ENCODE measurements at regions of chr11 and their contacts with region 1.

Region 1: GRCh38 chr11:103682318-103683184 is 353.9 kb upstream of the DDI1 start:
- DNase-seq: peak; percentile 49
- H3K4me3 ChIP-seq: no peak overlapping the region
- H3K27ac ChIP-seq: no peak overlapping the region
- H3K4me1 ChIP-seq: peaks cover 0 to 7% (median 3%) of the 10 kb centered on the region in 4 donors
- H3K27me3 ChIP-seq: no peaks in the 10 kb centered on the region
- CTCF ChIP-seq: peak; percentile 67 to 91 (median 80)
- EP300 ChIP-seq: no peak
- POLR2A ChIP-seq: no peak

Region 2: GRCh38 chr11:104134751-104135479 is 452.4 kb after region 1 on chr11:
- in situ Hi-C with region 1: loop called in 1 of 4 experiments (anchors 25 kb)
- intact Hi-C with region 1: no loop called
- DNase-seq: no peak
- H3K4me3 ChIP-seq: no peak overlapping the region
- H3K27ac ChIP-seq: no peak overlapping the region
- H3K4me1 ChIP-seq: no peaks in the 10 kb centered on the region
- H3K27me3 ChIP-seq: no peaks in the 10 kb centered on the region
- CTCF ChIP-seq: no peak
- EP300 ChIP-seq: no peak
- POLR2A ChIP-seq: no peak

Region 3: DNA sequence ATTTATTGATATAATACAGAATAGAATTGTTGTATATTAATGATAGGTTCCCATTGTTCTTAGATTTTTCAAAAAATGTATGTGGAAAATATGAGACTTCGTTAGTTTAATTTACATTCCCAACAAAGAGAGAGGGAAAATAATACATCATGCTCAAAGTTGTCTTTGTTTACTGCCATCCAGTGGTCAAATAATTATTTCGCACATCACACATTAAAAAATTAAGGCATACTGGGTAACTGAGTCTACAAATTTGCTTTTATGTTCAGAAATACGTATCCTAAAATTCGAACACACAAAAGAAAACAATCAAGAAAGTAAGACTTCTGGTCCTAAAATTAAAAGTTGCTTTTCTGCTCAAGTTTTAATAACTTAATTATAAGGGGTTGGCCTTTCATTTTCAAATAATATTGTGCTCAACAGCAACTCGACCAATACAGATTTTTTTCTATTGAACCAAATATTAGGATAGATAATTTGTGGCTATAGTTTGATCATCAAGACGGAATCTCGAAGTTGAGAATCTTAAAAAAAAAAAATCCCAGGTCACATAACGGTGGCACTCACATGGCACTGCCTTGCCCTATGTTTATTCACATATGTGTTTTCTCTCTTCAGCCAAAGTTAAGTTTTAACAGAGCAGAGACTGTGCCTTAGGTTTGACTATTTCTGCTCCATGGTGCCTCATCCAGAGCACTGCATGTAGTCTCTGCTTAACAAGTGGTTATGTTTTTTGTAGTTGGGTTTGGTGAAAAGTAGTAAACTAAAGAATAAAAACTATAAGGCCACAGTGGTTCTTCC is 469.1 kb after region 1 on chr11:
- in situ Hi-C with region 1: loop called in 2 of 4 experiments (anchors 10 to 25 kb)
- intact Hi-C with region 1: no loop called
- DNase-seq: no peak
- H3K4me3 ChIP-seq: no peak overlapping the region
- H3K27ac ChIP-seq: no peak overlapping the region
- H3K4me1 ChIP-seq: no peaks in the 10 kb centered on the region
- H3K27me3 ChIP-seq: no peaks in the 10 kb centered on the region
- CTCF ChIP-seq: peak in 3 of 5 experiments; percentile 21 to 29 (median 26)
- EP300 ChIP-seq: no peak
- POLR2A ChIP-seq: no peak

Measured in transverse colon (tissue), 4 donors.